Aorta (tissue), 5 donors: ENCODE measurements at regions of chr18 and their contacts with region 1.

Region 1: GRCh38 chr18:35355140-35355618 is 11.0 kb upstream of the ZNF24 start:
- DNase-seq: peak; percentile 82 to 83
- ATAC-seq: peak; percentile 93
- H3K4me3 ChIP-seq: peak overlapping the region; percentile 51 to 57
- H3K27ac ChIP-seq: no peak overlapping the region
- H3K4me1 ChIP-seq: no peaks in the 10 kb centered on the region
- H3K27me3 ChIP-seq: no peaks in the 10 kb centered on the region

Region 2: GRCh38 chr18:35231052-35231451 is 124.1 kb before region 1 on chr18:
- intact Hi-C with region 1: loop called (anchors 2 to 5 kb)
- DNase-seq: peak; percentile 83 to 91
- ATAC-seq: peak; percentile 88
- H3K4me3 ChIP-seq: peak overlapping the region in 1 of 2 donors; percentile 64
- H3K27ac ChIP-seq: no peak overlapping the region
- H3K4me1 ChIP-seq: no peaks in the 10 kb centered on the region
- H3K27me3 ChIP-seq: no peaks in the 10 kb centered on the region